AG04450 (cell line): ENCODE measurements at regions of chr4 and their contacts with region 1.

Region 1: GRCh38 chr4:48327366-48327765 is 14.0 kb upstream of the SLAIN2 start:
- DNase-seq: no peak
- H3K4me3 ChIP-seq: no peak overlapping the region
- H3K27ac ChIP-seq: no peak overlapping the region
- H3K27me3 ChIP-seq: no peaks in the 10 kb centered on the region
- CTCF ChIP-seq: no peak

Region 2: GRCh38 chr4:48212165-48212564 is 115.2 kb before region 1 on chr4:
- CTCF ChIA-PET with region 1: no interaction called
- POLR2A ChIA-PET with region 1: no interaction called
- DNase-seq: no peak
- H3K4me3 ChIP-seq: no peak overlapping the region
- H3K27ac ChIP-seq: no peak overlapping the region
- H3K27me3 ChIP-seq: peaks cover 2% of the 10 kb centered on the region
- CTCF ChIP-seq: no peak

Region 3: GRCh38 chr4:48237996-48238645 is 89.2 kb before region 1 on chr4:
- CTCF ChIA-PET with region 1: no interaction called
- POLR2A ChIA-PET with region 1: no interaction called
- DNase-seq: no peak
- H3K4me3 ChIP-seq: no peak overlapping the region
- H3K27ac ChIP-seq: no peak overlapping the region
- H3K27me3 ChIP-seq: peaks cover 4% of the 10 kb centered on the region
- CTCF ChIP-seq: no peak

Region 4: DNA sequence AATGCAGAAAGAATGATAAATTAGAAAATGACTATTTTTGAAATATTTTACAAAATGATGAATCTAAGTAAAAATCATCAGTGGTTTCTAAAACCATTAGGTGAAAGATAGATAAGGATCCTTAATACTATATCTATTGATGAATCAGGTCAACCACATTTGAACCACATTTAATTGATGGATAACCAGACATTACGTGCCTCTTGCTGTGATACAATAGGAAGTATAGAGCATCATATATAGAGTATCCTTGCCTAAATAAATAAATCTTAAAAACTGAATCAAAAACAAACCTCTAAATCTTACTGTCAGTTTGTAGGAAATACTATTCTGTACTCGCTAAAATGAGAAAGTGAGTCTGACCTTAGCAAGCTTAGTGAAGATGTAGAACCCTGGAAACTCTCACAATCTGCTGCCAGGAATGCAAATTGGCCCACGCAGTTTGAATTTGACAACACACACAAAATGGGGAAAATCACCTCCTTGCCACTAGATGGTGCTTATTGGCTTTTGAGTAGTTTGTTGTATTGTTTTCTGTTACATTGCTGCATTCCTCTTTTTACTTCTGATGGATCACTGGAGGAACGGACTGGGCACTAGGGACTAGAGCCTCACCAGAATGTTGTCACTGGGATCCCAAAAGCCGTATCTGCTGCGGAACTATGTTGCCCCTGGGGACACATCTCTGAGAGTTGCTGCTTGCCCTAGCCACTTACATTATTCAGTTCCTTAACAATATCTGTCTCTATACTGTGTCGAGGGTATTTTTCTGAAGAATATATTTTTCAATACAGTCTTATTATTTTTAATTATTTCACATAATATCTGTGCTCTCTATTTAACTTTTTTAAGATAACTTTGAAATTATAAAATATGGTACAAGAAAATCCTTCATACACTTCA is 11.4 kb before region 1 on chr4:
- CTCF ChIA-PET with region 1: interaction called, 12 read pairs
- POLR2A ChIA-PET with region 1: no interaction called
- DNase-seq: peak; percentile 39
- H3K4me3 ChIP-seq: no peak overlapping the region
- H3K27ac ChIP-seq: no peak overlapping the region
- H3K27me3 ChIP-seq: no peaks in the 10 kb centered on the region
- CTCF ChIP-seq: peak; percentile 78